Endothelial cell of umbilical vein (primary cell): ENCODE measurements at regions of chr7 and their contacts with region 1.

Region 1: GRCh38 chr7:87876040-87876868 is at the starts of genes DBF4 and SLC25A40:
- DNase-seq: peak; percentile 94
- H3K4me3 ChIP-seq: peak within 1 kb of the TSS; percentile 93 to 100 (median 98)
- H3K27ac ChIP-seq: peak within 1 kb of the TSS; percentile 61
- H3K4me1 ChIP-seq: peaks cover 17% of the 10 kb centered on the region
- H3K27me3 ChIP-seq: no peaks in the 10 kb centered on the region
- CTCF ChIP-seq: no peak
- POLR2A ChIP-seq: peak; percentile 96
- total RNA-seq, gene DBF4: 35.8 and 39.7 TPM in 2 replicates
- total RNA-seq, gene SLC25A40: 17.1 and 21.6 TPM in 2 replicates

Region 2: GRCh38 chr7:87219545-87220025 is 656.7 kb before region 1 on chr7 and contains the start of gene TMEM243:
- CTCF ChIA-PET with region 1: no interaction called
- POLR2A ChIA-PET with region 1: no interaction called
- dilution Hi-C with region 1: no loop called
- intact Hi-C with region 1: loop called (anchors 1 kb)
- DNase-seq: peak; percentile 87
- H3K4me3 ChIP-seq: peak within 1 kb of the TSS; percentile 32 to 76 (median 63)
- H3K27ac ChIP-seq: peak within 1 kb of the TSS; percentile 59
- H3K4me1 ChIP-seq: peaks cover 18% of the 10 kb centered on the region
- H3K27me3 ChIP-seq: peaks cover 3 to 13% of the 10 kb centered on the region in 2 experiments
- CTCF ChIP-seq: peak in 1 of 2 donors; percentile 8
- POLR2A ChIP-seq: peak; percentile 35
- total RNA-seq, gene TMEM243: 26.9 and 31.5 TPM in 2 replicates

Region 3: DNA sequence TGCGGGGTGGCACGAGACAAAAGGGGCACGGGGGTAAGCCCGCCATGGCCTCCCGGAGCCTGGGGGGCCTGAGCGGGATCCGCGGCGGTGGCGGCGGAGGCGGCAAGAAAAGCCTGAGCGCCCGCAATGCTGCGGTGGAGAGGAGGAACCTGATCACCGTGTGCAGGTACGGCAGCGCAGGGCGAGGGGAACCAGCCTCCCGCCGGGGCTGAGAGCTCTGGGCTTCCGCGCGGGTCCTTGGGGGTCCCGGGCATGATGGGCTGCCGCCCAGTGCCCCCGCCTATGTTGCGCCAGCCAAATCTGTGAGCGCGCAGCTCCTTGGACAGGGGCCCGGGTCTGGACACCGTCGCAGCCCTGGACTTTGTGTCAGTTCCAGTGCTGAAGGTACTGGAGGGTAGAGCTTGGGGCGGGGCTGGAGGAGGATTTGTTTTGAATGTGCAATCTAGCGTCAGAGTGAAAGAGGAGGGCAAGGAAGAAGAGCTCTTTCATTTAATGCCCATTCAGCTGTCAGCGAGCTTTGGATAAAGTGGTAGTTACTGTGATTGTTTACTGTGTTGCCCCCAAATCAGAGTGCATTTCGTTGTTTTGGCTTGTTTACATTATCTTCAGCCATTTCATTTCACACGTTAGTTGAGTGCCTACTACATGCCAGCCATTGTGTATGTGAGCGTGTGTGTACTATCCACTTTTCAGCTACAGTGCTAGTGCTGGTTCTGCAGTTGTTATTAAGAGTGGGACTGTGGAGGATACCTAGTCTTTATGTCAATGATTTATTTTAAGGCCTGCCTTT is 247.3 kb before region 1 on chr7:
- CTCF ChIA-PET with region 1: interaction called, 3 read pairs
- POLR2A ChIA-PET with region 1: no interaction called
- dilution Hi-C with region 1: no loop called
- intact Hi-C with region 1: loop called (anchors 5 kb)
- DNase-seq: peak; percentile 13
- H3K4me3 ChIP-seq: peak overlapping the region; percentile 44 to 53 (median 49)
- H3K27ac ChIP-seq: no peak overlapping the region
- H3K4me1 ChIP-seq: peaks cover 4% of the 10 kb centered on the region
- H3K27me3 ChIP-seq: peaks cover 0 to 2% of the 10 kb centered on the region in 2 experiments
- CTCF ChIP-seq: no peak
- POLR2A ChIP-seq: no peak

Region 4: DNA sequence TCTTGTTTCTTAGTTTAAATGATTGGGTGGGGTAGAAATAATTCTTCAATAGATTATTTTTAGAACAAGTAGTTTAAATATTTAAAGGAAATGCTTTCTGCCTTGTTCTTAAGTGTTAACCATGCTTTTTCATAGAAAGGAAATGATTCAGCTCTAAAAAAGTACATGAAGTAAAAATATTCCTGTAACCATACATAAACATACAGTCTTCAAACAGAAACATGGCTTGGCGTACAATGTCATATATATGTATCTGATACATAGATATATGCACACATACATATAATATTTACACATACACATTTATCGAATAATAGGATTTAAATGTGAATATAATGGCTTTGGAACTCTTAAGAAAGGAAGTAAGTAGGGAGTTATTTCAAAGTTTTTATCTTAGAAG is 163.7 kb before region 1 on chr7:
- CTCF ChIA-PET with region 1: no interaction called
- POLR2A ChIA-PET with region 1: no interaction called
- dilution Hi-C with region 1: no loop called
- intact Hi-C with region 1: loop called (anchors 2 kb)
- DNase-seq: peak; percentile 78
- H3K4me3 ChIP-seq: peak overlapping the region in 1 of 3 experiments; percentile 80
- H3K27ac ChIP-seq: peak overlapping the region; percentile 79
- H3K4me1 ChIP-seq: peaks cover 18% of the 10 kb centered on the region
- H3K27me3 ChIP-seq: no peaks in the 10 kb centered on the region
- CTCF ChIP-seq: no peak
- POLR2A ChIP-seq: no peak

Region 5: DNA sequence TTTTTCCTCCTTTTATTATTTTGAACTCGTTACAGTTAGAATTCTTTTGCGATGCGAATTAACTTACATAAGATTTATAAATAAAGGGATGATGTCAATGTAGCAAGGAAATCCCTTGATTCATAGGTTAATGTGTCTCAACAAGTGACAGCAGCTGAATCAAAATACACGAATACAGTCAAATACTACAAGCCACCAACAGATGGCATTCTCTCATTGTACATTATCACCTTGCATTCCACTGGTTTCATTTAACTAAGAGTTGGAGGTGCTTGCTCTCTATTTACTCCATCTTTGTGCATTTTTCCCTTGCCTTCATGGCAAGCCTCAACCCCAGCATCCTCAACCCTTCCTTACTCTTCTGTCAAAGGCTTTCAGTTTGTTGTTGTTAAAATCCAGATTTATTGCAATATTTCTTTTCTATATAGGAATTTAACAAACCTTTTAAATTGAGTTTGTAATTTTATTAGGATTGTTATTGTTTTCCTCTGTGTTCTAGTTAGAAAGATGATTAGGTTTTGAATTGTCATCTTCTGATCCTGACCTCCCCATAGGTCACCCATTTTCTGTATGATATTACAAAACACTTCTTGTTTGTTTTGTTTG is 78.4 kb before region 1 on chr7:
- CTCF ChIA-PET with region 1: interaction called, 9 read pairs
- POLR2A ChIA-PET with region 1: no interaction called
- dilution Hi-C with region 1: no loop called
- intact Hi-C with region 1: loop called (anchors 2 kb)
- DNase-seq: peak; percentile 73
- H3K4me3 ChIP-seq: no peak overlapping the region
- H3K27ac ChIP-seq: no peak overlapping the region
- H3K4me1 ChIP-seq: no peaks in the 10 kb centered on the region
- H3K27me3 ChIP-seq: no peaks in the 10 kb centered on the region
- CTCF ChIP-seq: peak; percentile 44 to 56
- POLR2A ChIP-seq: no peak

Region 6: GRCh38 chr7:87816389-87816788 is 59.9 kb before region 1 on chr7:
- CTCF ChIA-PET with region 1: no interaction called
- POLR2A ChIA-PET with region 1: no interaction called
- dilution Hi-C with region 1: no loop called
- intact Hi-C with region 1: no loop called
- DNase-seq: no peak
- H3K4me3 ChIP-seq: no peak overlapping the region
- H3K27ac ChIP-seq: no peak overlapping the region
- H3K4me1 ChIP-seq: no peaks in the 10 kb centered on the region
- H3K27me3 ChIP-seq: no peaks in the 10 kb centered on the region
- CTCF ChIP-seq: no peak
- POLR2A ChIP-seq: no peak

Region 7: GRCh38 chr7:87933945-87934698 is 57.9 kb after region 1 on chr7 and contains the start of gene ADAM22:
- CTCF ChIA-PET with region 1: no interaction called
- POLR2A ChIA-PET with region 1: no interaction called
- dilution Hi-C with region 1: no loop called
- intact Hi-C with region 1: loop called (anchors 1 kb)
- DNase-seq: peak; percentile 89
- H3K4me3 ChIP-seq: peak within 1 kb of the TSS; percentile 7 to 66 (median 55)
- H3K27ac ChIP-seq: no peak within 1 kb of the TSS
- H3K4me1 ChIP-seq: peaks cover 11% of the 10 kb centered on the region
- H3K27me3 ChIP-seq: peaks cover 5 to 18% of the 10 kb centered on the region in 2 experiments
- CTCF ChIP-seq: no peak
- POLR2A ChIP-seq: no peak
- total RNA-seq, gene ADAM22: 0.53 and 1.4 TPM in 2 replicates

Region 8: GRCh38 chr7:88219781-88220747 is 343.8 kb after region 1 on chr7 and contains the start of gene SRI:
- CTCF ChIA-PET with region 1: no interaction called
- POLR2A ChIA-PET with region 1: no interaction called
- dilution Hi-C with region 1: no loop called
- intact Hi-C with region 1: loop called (anchors 1 kb)
- DNase-seq: peak; percentile 88
- H3K4me3 ChIP-seq: peak within 1 kb of the TSS; percentile 81 to 94 (median 93)
- H3K27ac ChIP-seq: peak within 1 kb of the TSS; percentile 94
- H3K4me1 ChIP-seq: peaks cover 13% of the 10 kb centered on the region
- H3K27me3 ChIP-seq: no peaks in the 10 kb centered on the region
- CTCF ChIP-seq: peak; percentile 57 to 62
- POLR2A ChIP-seq: peak; percentile 82
- total RNA-seq, gene SRI: 191 and 204 TPM in 2 replicates